HEK293 (cell line): ENCODE measurements at regions of chr4 and their contacts with region 1.

Region 1: GRCh38 chr4:110005461-110006056 is 92.9 kb downstream of the EGF start:
- H3K4me3 ChIP-seq: no peak overlapping the region
- H3K27ac ChIP-seq: no peak overlapping the region
- H3K4me1 ChIP-seq: no peaks in the 10 kb centered on the region
- CTCF ChIP-seq: no peak; the same call in 1 of the 2 replicates

Region 2: DNA sequence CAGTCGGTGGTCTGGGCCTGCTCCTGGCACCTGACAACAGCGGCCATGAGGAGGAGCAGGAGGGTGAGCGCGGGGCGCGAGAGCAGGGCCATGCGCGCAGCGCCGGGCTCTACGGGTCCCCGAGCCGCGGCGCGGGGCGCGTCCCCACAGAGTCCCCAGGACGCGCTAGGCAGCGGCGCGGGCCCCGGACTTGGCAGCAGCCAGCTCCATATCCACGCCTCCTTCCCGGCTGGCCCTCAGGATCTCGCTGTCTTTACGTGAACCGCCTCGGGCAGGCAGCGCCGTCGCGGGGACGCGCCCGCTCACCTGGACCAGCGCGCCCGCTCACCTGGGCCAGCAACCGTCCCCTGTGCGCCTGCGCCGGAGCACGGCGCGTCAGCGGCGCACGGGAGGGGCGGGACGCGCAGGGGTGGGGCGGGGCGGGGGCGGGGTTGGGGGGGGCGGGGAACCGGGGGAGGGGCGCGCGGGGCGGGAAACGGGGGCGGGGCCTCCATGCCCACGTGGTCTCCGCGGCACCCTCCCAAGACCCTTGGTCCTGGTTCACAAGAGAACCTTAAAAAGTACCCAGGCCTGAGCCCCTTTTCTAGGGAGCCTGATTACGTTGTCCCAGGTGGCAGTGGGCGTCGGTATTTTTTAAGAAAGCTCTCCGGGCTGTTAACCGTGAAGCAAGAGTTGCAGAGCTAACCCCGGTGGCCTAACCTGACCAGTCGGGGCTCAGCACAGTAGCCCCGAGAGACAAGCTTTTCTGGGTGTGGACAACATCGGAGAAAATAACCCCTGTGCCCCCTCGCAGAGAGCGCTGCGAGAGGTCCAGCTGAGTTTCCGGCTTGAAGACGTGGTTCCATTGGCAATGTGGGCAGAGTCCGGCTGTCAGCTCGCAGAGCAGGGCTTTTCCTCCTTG is 275.6 kb before region 1 on chr4 and contains the start of gene PLA2G12A:
- CTCF ChIA-PET with region 1: no interaction called
- POLR2A ChIA-PET with region 1: no interaction called
- H3K4me3 ChIP-seq: peak within 1 kb of the TSS; percentile 88
- H3K27ac ChIP-seq: peak within 1 kb of the TSS; percentile 59; the same call in 1 of the 2 replicates
- H3K4me1 ChIP-seq: no peaks in the 10 kb centered on the region
- CTCF ChIP-seq: no peak

Region 3: DNA sequence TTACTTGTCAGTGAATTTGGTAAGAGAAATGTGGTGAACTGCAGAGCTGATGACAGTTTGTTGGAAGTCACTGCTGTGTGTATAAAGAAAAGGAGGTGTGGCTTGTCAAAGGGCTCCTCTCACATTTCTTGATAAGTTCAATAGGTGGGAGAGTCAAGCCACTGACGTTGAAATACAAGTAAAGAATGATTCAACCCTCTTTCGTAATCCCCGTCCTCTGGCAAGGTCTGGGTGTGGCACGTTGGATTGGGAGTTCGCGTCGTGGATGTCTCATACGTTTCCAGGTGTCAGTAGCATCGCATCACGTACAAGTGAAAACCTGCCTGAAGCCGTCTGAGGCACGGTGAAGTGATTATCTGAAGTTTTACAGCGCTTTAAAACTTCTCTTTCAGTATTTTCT is 16.5 kb before region 1 on chr4:
- CTCF ChIA-PET with region 1: no interaction called
- POLR2A ChIA-PET with region 1: no interaction called
- H3K4me3 ChIP-seq: no peak overlapping the region
- H3K27ac ChIP-seq: no peak overlapping the region
- H3K4me1 ChIP-seq: no peaks in the 10 kb centered on the region
- CTCF ChIP-seq: no peak

Region 4: DNA sequence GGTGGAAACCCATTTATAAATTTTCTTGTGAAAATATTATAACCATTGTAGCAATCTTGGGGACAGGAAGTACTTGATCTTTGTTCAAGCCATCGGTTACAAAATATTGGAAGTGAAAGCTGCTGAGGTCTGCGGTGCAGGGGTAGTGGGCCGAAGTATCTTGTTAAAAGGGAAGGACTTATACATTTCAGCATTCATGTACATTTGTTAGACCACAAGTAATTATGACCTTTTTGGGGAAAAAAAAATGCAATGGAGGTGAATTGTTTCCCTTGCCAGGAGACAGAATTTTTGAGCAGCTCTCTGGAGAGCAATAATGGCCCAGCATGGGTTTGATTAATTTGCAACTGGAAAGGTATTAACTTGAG is 28.5 kb after region 1 on chr4:
- CTCF ChIA-PET with region 1: no interaction called
- POLR2A ChIA-PET with region 1: no interaction called
- H3K4me3 ChIP-seq: no peak overlapping the region
- H3K27ac ChIP-seq: no peak overlapping the region
- H3K4me1 ChIP-seq: no peaks in the 10 kb centered on the region
- CTCF ChIP-seq: no peak

Region 5: GRCh38 chr4:110344162-110344561 is 338.6 kb after region 1 on chr4:
- CTCF ChIA-PET with region 1: interaction called, 15 read pairs
- POLR2A ChIA-PET with region 1: no interaction called
- H3K4me3 ChIP-seq: no peak overlapping the region
- H3K27ac ChIP-seq: no peak overlapping the region
- H3K4me1 ChIP-seq: no peaks in the 10 kb centered on the region
- CTCF ChIP-seq: peak; percentile 50; the same call in 1 of the 2 replicates

Region 6: DNA sequence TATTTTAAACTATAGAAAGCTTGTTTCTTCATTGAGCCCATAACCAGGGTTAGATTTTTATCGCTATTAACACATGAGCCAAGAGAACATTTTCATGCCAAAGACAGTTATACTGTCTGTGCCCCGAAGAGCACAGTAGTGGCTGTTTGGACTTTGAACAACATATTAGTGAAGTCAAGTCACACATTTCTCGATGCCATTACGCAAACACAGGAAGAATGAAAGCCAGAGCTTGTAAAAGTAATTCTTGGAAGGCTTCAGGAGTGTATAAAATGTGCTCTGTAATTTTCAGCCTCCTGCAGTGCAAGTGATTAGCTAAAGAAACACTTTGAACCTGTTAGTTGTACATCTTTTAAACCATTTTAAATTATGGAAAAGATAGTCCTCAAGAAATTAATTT is 1208.0 kb after region 1 on chr4:
- CTCF ChIA-PET with region 1: no interaction called
- POLR2A ChIA-PET with region 1: no interaction called
- H3K4me3 ChIP-seq: no peak overlapping the region
- H3K27ac ChIP-seq: no peak overlapping the region
- H3K4me1 ChIP-seq: no peaks in the 10 kb centered on the region
- CTCF ChIP-seq: no peak